Activated CD4-positive, alpha-beta T cell treated with anti-CD3 and anti-CD28 coated beads, Interleukin-2, amount 10 ng/mL, durations not matched to agents 24 days and 14 days (primary cell): ENCODE measurements at regions of chr12 and their contacts with region 1.

Region 1: DNA sequence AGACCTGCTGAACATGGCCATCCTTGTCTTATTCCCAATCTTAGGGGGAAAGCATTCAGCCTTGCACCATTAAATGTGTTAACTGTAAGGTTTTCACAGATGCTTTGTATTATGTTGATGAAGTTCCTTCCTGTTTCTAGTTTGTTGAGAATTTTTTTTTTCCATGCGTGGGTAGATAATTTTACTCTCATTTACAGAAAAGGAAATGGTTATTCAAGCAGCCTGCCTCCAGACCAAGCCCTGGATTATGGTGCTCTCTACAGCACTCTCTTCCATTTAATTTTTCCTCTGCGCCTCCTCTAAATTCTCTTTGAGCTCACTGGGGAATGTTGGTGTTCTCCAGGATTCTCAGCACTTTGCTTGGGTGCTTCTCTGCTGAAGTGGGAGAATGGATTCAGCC is 179.3 kb upstream of the PZP start:
- DNase-seq: no peak
- H3K4me3 Mint-ChIP-seq: no peak overlapping the region
- H3K27ac Mint-ChIP-seq: no peak overlapping the region
- H3K4me1 Mint-ChIP-seq: peaks cover 10% of the 10 kb centered on the region
- H3K27me3 Mint-ChIP-seq: peaks cover 3% of the 10 kb centered on the region

Region 2: DNA sequence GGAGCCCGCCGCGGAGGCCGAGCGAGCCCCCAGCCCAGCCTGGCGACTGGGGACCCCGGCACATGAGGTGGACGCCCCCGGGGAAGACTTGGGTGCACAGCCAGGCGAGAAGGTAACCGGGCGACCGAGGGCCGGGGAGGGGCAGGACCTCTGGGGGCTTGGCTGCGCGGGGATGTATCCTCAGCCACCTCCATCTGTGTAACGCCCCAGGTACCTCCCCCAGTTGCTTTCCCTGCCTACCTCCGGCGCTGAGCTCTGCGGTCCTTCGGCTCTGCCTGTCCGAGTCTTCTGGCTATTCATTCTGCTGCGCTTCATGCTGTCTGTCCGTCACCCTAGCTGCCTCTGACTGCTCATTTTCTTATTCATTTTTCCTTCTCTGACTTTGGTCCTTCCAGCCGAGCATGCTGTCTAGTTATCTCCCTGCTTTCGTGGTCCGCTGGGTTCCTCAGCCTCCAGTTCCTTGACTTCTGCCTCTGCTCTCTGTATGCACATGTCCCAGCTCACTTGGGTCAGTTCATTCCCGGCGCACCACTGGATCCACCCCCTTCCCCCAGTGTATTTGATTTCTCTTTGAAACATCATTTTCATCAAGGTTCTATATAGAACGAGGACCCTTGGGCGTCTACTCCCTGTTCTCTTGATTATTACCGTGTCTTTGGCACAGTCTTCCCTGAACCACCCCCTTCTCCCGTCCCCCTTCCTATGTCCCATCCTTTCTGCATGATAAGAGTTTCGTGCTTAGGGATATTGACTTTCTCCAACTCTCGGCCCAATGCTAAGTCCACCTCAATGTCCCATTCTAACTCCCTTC is 472.5 kb before region 1 on chr12:
- intact Hi-C with region 1: no loop called
- DNase-seq: peak; percentile 90
- H3K4me3 Mint-ChIP-seq: no peak overlapping the region
- H3K27ac Mint-ChIP-seq: no peak overlapping the region
- H3K4me1 Mint-ChIP-seq: peaks cover 9% of the 10 kb centered on the region
- H3K27me3 Mint-ChIP-seq: peaks cover 13% of the 10 kb centered on the region

Region 3: GRCh38 chr12:9347328-9348127 is 39.9 kb before region 1 on chr12:
- intact Hi-C with region 1: no loop called
- DNase-seq: no peak
- H3K4me3 Mint-ChIP-seq: no peak overlapping the region
- H3K27ac Mint-ChIP-seq: no peak overlapping the region
- H3K4me1 Mint-ChIP-seq: peaks cover 7% of the 10 kb centered on the region
- H3K27me3 Mint-ChIP-seq: no peaks in the 10 kb centered on the region

Region 4: GRCh38 chr12:9364224-9365176 is 22.9 kb before region 1 on chr12:
- intact Hi-C with region 1: loop called (anchors 1 kb)
- DNase-seq: peak; percentile 81
- H3K4me3 Mint-ChIP-seq: peak overlapping the region; percentile 66
- H3K27ac Mint-ChIP-seq: peak overlapping the region; percentile 88
- H3K4me1 Mint-ChIP-seq: peaks cover 40% of the 10 kb centered on the region
- H3K27me3 Mint-ChIP-seq: peaks cover 33% of the 10 kb centered on the region

Region 5: DNA sequence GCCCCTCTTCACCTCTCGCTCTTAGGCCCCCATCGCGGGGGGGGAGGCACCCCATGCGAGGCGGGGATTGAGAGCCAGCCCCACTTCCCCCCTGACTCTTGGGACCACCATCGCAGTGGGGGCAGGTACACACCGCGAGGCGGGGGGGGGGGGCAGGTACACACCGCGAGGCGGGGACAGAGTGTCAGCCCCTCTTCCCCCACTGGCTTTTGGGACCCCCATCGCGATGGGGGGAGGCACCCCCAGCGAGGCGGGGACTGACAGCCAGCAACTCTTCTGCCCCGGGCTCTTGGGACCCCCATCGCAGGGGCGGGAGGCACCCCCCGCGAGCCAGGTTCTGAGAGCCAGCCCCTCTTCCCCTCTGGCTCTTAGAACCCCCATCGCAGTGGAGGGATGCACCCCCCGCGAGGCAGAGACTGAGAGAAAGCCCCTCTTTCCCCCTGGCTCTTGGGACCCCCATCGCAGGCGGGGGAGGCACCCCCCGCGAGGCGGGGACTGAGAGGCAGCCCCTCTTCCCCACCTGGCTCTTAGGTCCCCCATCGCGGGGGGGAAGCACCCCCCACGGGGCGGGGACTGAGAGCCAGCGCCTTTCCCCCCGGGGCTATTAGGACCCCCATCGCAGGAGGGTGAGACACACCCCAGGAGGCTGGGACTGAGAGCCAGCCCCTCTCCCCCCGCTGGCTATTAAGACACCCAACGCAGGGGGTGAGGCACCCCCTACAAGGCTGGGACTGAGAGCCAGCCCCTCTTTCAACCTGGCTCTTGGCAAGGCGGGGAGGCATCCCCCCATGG is 17.2 kb after region 1 on chr12:
- intact Hi-C with region 1: no loop called
- DNase-seq: no peak
- H3K4me3 Mint-ChIP-seq: no peak overlapping the region
- H3K27ac Mint-ChIP-seq: no peak overlapping the region
- H3K4me1 Mint-ChIP-seq: no peaks in the 10 kb centered on the region
- H3K27me3 Mint-ChIP-seq: no peaks in the 10 kb centered on the region